MCF 10A (cell line): ENCODE measurements at regions of chr5 and their contacts with region 1.

Region 1: GRCh38 chr5:14011089-14012004 is 66.9 kb upstream of the DNAH5 start:
- DNase-seq: peak; percentile 81
- H3K4me3 Mint-ChIP-seq: peak overlapping the region; percentile 70
- H3K27ac Mint-ChIP-seq: no peak overlapping the region
- H3K4me1 Mint-ChIP-seq: no peaks in the 10 kb centered on the region
- H3K27me3 Mint-ChIP-seq: no peaks in the 10 kb centered on the region
- CTCF ChIP-seq: no peak

Region 2: DNA sequence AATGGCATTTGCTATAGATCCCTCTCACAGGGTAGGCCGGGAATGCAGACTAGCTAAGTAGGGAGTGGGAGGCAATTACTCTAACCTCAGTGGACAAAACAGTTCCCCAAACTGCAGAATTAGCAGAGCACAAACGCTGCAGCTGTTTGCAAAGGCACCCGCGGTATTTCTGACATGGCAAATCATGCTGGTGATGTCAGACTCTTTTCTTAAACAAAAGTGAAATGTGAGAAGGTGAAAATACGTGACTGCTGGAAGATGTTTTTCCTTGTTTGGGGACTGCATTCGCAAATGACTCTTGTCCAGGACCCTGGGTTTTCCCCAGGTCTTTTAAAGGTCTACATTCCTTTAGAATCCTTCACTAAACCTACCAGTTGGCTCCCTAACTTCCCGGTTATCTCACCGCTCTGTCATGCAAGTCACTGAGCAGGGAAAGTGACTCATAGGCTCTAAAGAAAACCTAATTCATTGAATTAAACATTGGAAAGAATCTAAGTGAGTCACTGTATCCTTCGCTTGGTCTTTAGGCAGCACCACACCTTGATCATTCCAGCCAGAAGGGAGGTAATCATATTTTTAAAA is 24.6 kb after region 1 on chr5:
- CTCF ChIA-PET with region 1: no interaction called
- POLR2A ChIA-PET with region 1: interaction called, 12 read pairs
- intact Hi-C with region 1: loop called (anchors 2 kb)
- DNase-seq: peak; percentile 91
- H3K4me3 Mint-ChIP-seq: peak overlapping the region; percentile 62
- H3K27ac Mint-ChIP-seq: peak overlapping the region; percentile 65
- H3K4me1 Mint-ChIP-seq: peaks cover 33% of the 10 kb centered on the region
- H3K27me3 Mint-ChIP-seq: no peaks in the 10 kb centered on the region
- CTCF ChIP-seq: no peak